WTC11 (cell line): ENCODE measurements at regions of chr6 and their contacts with region 1.

Region 1: GRCh38 chr6:10418928-10419748 is 4.3 kb upstream of the TFAP2A start:
- DNase-seq: peak; percentile 83
- ATAC-seq: peak; percentile 32
- H3K4me3 Mint-ChIP-seq: peak overlapping the region; percentile 68
- H3K27ac Mint-ChIP-seq: no peak overlapping the region
- H3K4me1 Mint-ChIP-seq: peaks cover 77% of the 10 kb centered on the region
- H3K27me3 Mint-ChIP-seq: peaks cover 100% of the 10 kb centered on the region
- CTCF ChIP-seq: no peak

Region 2: GRCh38 chr6:10323018-10323760 is 95.9 kb before region 1 on chr6:
- CTCF ChIA-PET with region 1: no interaction called
- POLR2A ChIA-PET with region 1: no interaction called
- DNase-seq: no peak
- ATAC-seq: no peak
- H3K4me3 Mint-ChIP-seq: no peak overlapping the region
- H3K27ac Mint-ChIP-seq: no peak overlapping the region
- H3K4me1 Mint-ChIP-seq: peaks cover 8% of the 10 kb centered on the region
- H3K27me3 Mint-ChIP-seq: peaks cover 6% of the 10 kb centered on the region
- CTCF ChIP-seq: no peak

Region 3: DNA sequence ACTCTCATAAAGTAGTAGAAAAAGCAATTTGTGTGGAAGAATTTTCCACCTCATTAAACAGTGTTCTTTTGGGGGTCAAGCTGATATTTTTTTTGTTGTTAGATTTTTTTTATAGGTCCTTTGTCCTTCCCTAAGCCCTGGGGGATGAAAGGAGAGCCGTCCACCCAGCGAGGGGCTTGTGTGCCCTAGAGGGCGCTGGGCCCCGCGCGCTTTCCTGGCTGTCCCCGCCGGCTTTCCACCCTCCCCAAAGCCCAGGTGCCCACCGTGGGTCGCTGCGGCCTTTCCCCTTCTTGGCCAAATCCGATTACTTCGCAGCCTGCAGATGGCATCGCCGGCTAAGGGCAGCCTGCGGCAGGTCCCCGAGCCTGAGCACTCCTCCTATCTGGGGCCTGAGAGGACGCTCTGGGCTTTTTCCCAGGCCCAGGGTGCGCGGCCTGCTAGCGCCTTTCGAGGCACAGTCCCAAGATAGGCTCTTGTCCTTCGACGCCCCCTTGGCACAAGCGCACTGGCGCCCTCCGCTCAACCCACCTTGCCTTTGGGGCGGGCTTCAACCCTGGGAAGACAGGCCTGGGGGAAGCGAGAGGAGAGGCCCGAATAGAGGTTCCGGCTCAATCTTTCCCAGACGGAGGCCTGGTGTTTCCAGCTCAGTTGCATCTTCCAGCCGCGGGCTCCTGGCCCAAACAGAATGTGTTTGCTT is 37.9 kb before region 1 on chr6:
- CTCF ChIA-PET with region 1: interaction called, 20 read pairs
- POLR2A ChIA-PET with region 1: no interaction called
- DNase-seq: peak; percentile 61
- ATAC-seq: peak; percentile 70
- H3K4me3 Mint-ChIP-seq: peak overlapping the region; percentile 59
- H3K27ac Mint-ChIP-seq: no peak overlapping the region
- H3K4me1 Mint-ChIP-seq: peaks cover 48% of the 10 kb centered on the region
- H3K27me3 Mint-ChIP-seq: peaks cover 93% of the 10 kb centered on the region
- CTCF ChIP-seq: no peak

Region 4: GRCh38 chr6:10389739-10390494 is 29.2 kb before region 1 on chr6:
- CTCF ChIA-PET with region 1: interaction called, 21 read pairs
- POLR2A ChIA-PET with region 1: interaction called, 4 read pairs
- DNase-seq: peak; percentile 41
- ATAC-seq: peak; percentile 8
- H3K4me3 Mint-ChIP-seq: peak overlapping the region; percentile 74
- H3K27ac Mint-ChIP-seq: no peak overlapping the region
- H3K4me1 Mint-ChIP-seq: peaks cover 82% of the 10 kb centered on the region
- H3K27me3 Mint-ChIP-seq: peaks cover 100% of the 10 kb centered on the region
- CTCF ChIP-seq: no peak

Region 5: GRCh38 chr6:10404107-10404798 is 14.9 kb before region 1 on chr6:
- CTCF ChIA-PET with region 1: interaction called, 30 read pairs
- POLR2A ChIA-PET with region 1: interaction called, 5 read pairs
- DNase-seq: peak; percentile 95
- ATAC-seq: peak; percentile 90
- H3K4me3 Mint-ChIP-seq: peak overlapping the region; percentile 83
- H3K27ac Mint-ChIP-seq: peak overlapping the region; percentile 94
- H3K4me1 Mint-ChIP-seq: peaks cover 86% of the 10 kb centered on the region
- H3K27me3 Mint-ChIP-seq: peaks cover 92% of the 10 kb centered on the region
- CTCF ChIP-seq: no peak

Region 6: GRCh38 chr6:10429638-10430427 is 10.7 kb after region 1 on chr6:
- CTCF ChIA-PET with region 1: interaction called, 54 read pairs
- POLR2A ChIA-PET with region 1: interaction called, 3 read pairs
- DNase-seq: no peak
- ATAC-seq: peak; percentile 37
- H3K4me3 Mint-ChIP-seq: no peak overlapping the region
- H3K27ac Mint-ChIP-seq: no peak overlapping the region
- H3K4me1 Mint-ChIP-seq: peaks cover 46% of the 10 kb centered on the region
- H3K27me3 Mint-ChIP-seq: peaks cover 65% of the 10 kb centered on the region
- CTCF ChIP-seq: peak; percentile 22; the same call in 1 of the 2 replicates

Region 7: GRCh38 chr6:10434692-10435376 is 15.7 kb after region 1 on chr6:
- CTCF ChIA-PET with region 1: interaction called, 34 read pairs
- POLR2A ChIA-PET with region 1: interaction called, 3 read pairs
- DNase-seq: no peak
- ATAC-seq: peak; percentile 79
- H3K4me3 Mint-ChIP-seq: peak overlapping the region; percentile 34; the same call in 1 of the 2 replicates
- H3K27ac Mint-ChIP-seq: no peak overlapping the region
- H3K4me1 Mint-ChIP-seq: peaks cover 28% of the 10 kb centered on the region
- H3K27me3 Mint-ChIP-seq: peaks cover 16% of the 10 kb centered on the region
- CTCF ChIP-seq: peak; percentile 68

Region 8: GRCh38 chr6:10465629-10466504 is 46.7 kb after region 1 on chr6:
- CTCF ChIA-PET with region 1: interaction called, 17 read pairs
- POLR2A ChIA-PET with region 1: no interaction called
- DNase-seq: peak; percentile 83
- ATAC-seq: peak; percentile 85
- H3K4me3 Mint-ChIP-seq: peak overlapping the region; percentile 19
- H3K27ac Mint-ChIP-seq: no peak overlapping the region
- H3K4me1 Mint-ChIP-seq: peaks cover 15% of the 10 kb centered on the region
- H3K27me3 Mint-ChIP-seq: peaks cover 10% of the 10 kb centered on the region; the same call in 1 of the 2 replicates
- CTCF ChIP-seq: peak; percentile 40; the same call in 1 of the 2 replicates

Region 9: DNA sequence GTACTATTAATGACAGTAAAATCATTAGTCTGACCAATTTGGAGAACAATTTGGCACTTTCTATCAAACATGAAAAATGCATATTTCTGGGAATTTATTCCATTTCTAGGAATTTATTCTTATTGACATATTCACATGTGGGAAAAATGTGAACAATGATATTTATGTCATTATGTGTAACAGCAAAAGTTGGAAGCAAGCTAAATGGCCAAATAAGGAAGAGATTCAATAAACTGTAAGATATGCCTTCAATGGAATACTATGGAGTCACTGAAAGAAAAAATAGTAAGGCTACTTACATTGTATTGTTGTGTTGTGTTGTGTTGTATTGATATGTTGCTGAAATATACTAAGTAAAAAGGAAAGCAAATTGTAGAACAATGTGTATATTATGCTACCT is 1770.5 kb after region 1 on chr6:
- CTCF ChIA-PET with region 1: no interaction called
- POLR2A ChIA-PET with region 1: no interaction called
- DNase-seq: no peak
- ATAC-seq: no peak
- H3K4me3 Mint-ChIP-seq: no peak overlapping the region
- H3K27ac Mint-ChIP-seq: no peak overlapping the region
- H3K4me1 Mint-ChIP-seq: peaks cover 4% of the 10 kb centered on the region; the same call in 1 of the 2 replicates
- H3K27me3 Mint-ChIP-seq: no peaks in the 10 kb centered on the region
- CTCF ChIP-seq: no peak